ENCODE measurements at regions of chr7 and their contacts with region 1.

Region 1: GRCh38 chr7:123748734-123749536 is at the start of gene WASL:
- DNase-seq: peak; percentile 97
- H3K4me3 Mint-ChIP-seq: peak within 1 kb of the TSS; percentile 89
- H3K27ac Mint-ChIP-seq: peak within 1 kb of the TSS; percentile 94
- H3K4me1 Mint-ChIP-seq: peaks cover 45% of the 10 kb centered on the region
- H3K27me3 Mint-ChIP-seq: peaks cover 8% of the 10 kb centered on the region
- total RNA-seq, gene WASL: 6.4 and 6.7 TPM in 2 replicates

Region 2: GRCh38 chr7:123534383-123535260 is 214.3 kb before region 1 on chr7 and contains the start of gene IQUB:
- intact Hi-C with region 1: loop called (anchors 2 kb)
- DNase-seq: peak; percentile 97
- H3K4me3 Mint-ChIP-seq: peak within 1 kb of the TSS; percentile 97
- H3K27ac Mint-ChIP-seq: peak within 1 kb of the TSS; percentile 90
- H3K4me1 Mint-ChIP-seq: peaks cover 22% of the 10 kb centered on the region
- H3K27me3 Mint-ChIP-seq: peaks cover 29% of the 10 kb centered on the region
- total RNA-seq, gene IQUB: 0.05 TPM in 1 of 2 replicates, not detected in the other

Region 3: DNA sequence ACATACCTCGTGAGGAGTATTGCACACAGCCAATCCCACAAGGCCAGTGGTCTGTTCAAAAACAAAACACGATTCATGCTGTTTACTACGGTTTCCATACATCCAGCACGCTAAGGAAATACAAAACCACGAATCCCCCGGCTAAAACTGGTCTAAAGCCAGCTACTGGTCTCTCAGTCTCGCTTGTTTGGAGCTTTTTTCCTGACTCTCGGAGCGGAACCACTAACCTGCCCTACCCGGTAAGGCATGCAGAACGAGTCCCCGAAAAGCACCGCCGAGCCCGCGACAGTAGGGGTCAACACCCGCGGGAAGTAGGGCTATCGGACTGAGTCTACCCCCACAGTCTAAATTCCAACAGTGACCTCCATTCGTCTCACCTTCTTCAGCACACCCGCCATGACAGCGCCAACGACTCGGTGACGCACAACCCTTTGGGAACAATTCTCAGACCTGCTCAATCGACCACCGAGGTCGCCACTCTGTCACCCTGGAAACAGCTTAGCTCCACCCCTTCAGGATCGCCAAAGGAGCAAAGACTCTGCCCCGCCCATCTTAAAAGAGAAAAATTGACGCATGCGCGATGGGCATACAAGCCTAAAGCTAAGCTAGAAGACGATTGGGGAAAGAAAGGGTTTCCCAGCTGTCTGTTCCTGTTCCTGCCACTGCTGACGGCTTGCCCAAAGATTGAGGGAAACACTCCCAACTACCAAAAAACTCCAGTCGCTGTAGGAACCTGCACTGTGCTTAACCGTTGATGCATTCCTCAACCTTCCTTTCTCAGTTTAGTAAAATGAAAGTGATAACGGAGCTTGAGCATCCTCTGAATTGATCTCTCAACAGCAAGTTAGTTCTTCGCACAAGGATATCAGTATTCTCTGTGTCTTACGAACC is 191.3 kb before region 1 on chr7 and contains the start of gene NDUFA5:
- intact Hi-C with region 1: loop called (anchors 1 kb)
- DNase-seq: peak; percentile 99
- H3K4me3 Mint-ChIP-seq: no peak within 1 kb of the TSS
- H3K27ac Mint-ChIP-seq: no peak within 1 kb of the TSS
- H3K4me1 Mint-ChIP-seq: peaks cover 2% of the 10 kb centered on the region
- H3K27me3 Mint-ChIP-seq: peaks cover 8% of the 10 kb centered on the region
- total RNA-seq, gene NDUFA5: 56.1 and 62.1 TPM in 2 replicates

Region 4: DNA sequence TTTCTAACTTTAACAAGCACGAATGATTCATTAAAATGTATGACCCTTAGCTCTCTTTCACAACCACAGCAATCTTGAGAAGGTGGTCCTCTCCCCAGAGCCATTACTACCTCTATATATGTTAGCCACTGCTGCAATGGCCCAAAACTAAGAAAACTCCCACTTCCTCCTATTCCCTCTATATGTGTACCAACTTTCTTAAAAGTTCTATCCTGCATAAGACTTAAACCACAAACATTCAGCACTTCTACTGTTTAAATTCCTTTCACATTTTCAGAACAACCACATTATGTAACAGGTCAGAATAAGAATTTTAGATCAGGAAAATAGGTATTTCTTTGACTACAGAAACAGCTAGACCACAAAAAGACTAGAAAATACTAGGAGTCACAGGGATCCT is 36.3 kb before region 1 on chr7:
- intact Hi-C with region 1: loop called (anchors 1 kb)
- DNase-seq: no peak
- H3K4me3 Mint-ChIP-seq: peak overlapping the region; percentile 16
- H3K27ac Mint-ChIP-seq: peak overlapping the region; percentile 3
- H3K4me1 Mint-ChIP-seq: peaks cover 45% of the 10 kb centered on the region
- H3K27me3 Mint-ChIP-seq: no peaks in the 10 kb centered on the region

Region 5: GRCh38 chr7:123823898-123824753 is 75.2 kb after region 1 on chr7:
- intact Hi-C with region 1: loop called (anchors 1 kb)
- DNase-seq: peak; percentile 78
- H3K4me3 Mint-ChIP-seq: peak overlapping the region; percentile 31
- H3K27ac Mint-ChIP-seq: peak overlapping the region; percentile 66
- H3K4me1 Mint-ChIP-seq: peaks cover 16% of the 10 kb centered on the region
- H3K27me3 Mint-ChIP-seq: peaks cover 14% of the 10 kb centered on the region

Region 6: GRCh38 chr7:123871998-123872867 is 123.3 kb after region 1 on chr7:
- intact Hi-C with region 1: no loop called
- DNase-seq: peak; percentile 75
- H3K4me3 Mint-ChIP-seq: no peak overlapping the region
- H3K27ac Mint-ChIP-seq: no peak overlapping the region
- H3K4me1 Mint-ChIP-seq: no peaks in the 10 kb centered on the region
- H3K27me3 Mint-ChIP-seq: peaks cover 4% of the 10 kb centered on the region

Region 7: DNA sequence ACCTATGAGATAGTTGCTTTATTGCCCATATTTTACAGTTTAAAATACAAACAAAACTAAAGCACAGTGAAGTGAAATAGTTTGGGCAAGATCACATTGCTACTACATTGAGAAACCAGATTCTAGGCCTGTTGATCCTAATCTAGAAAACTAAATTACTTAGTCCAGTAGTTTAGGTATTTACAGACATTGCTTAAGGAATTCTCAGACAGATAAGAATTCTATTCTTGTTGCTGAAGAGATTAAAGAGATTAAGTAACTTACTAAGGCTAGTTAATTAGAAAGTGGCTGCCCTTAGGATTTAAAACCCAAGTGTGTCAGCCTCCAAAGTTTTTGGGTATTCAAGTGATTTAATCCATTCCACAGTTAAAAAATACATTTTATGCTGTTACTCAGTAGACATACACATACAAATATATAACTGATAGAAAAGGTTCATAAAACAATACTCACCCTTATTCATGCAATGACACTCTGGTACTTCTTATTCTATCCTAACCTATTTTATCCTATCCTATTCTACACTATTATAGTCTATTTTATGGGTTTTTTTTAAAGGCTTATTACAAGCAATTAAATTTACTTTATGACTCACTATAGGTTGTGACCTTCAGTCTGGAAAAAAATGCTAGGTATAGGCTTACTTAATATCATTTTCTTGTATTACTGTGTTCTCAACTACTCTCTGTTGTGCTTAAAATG is 186.6 kb after region 1 on chr7:
- intact Hi-C with region 1: no loop called
- DNase-seq: no peak
- H3K4me3 Mint-ChIP-seq: no peak overlapping the region
- H3K27ac Mint-ChIP-seq: no peak overlapping the region
- H3K4me1 Mint-ChIP-seq: no peaks in the 10 kb centered on the region
- H3K27me3 Mint-ChIP-seq: no peaks in the 10 kb centered on the region

Region 8: DNA sequence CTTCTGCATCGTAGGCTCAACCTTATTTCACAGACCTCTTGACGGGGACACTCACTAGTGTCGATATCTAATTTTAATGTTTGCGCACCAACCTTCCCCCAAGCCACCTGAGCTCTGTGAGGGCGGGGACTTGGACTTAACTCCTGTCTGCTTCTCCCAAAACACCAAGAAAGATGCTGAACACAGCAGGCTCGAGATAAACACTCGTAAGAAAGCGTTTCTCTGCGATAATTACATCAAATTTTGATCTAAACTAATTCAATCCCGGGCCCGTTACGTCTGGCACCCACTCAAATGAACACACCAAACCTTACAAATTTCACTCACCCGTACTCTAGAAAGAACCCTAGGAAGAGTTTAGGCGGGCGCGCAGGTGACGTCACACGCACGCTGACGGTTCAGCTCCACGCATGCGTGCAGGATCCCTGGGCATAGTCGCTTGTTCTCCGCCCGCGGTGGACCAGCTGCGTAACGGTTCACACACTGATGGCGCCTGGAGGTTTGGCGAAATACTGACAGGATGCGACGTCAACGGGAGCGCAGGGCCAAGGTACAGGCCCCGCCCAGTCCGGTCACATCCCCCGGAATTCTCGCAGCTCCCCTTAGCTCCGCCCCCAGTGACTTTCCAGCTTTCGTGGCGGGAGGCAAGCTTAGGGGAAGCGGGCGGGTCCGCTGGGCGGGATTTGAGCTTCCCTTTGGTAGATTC is 1180.7 kb after region 1 on chr7 and contains the start of gene POT1:
- intact Hi-C with region 1: loop called (anchors 5 kb)
- DNase-seq: peak; percentile 98
- H3K4me3 Mint-ChIP-seq: peak within 1 kb of the TSS; percentile 98
- H3K27ac Mint-ChIP-seq: peak within 1 kb of the TSS; percentile 97
- H3K4me1 Mint-ChIP-seq: peaks cover 30% of the 10 kb centered on the region
- H3K27me3 Mint-ChIP-seq: peaks cover 4% of the 10 kb centered on the region
- total RNA-seq, gene POT1: 31.0 TPM in 2 replicates

Measured in activated CD4-positive, alpha-beta T cell treated with anti-CD3 and anti-CD28 coated beads, Interleukin-2, amount 10 ng/mL, durations not matched to agents 24 days and 14 days (primary cell).